ENCODE measurements at regions of chr3 and their contacts with region 1.

Region 1: GRCh38 chr3:193780810-193781472 is 187.9 kb downstream of the OPA1 start:
- DNase-seq: peak; percentile 94
- H3K4me3 ChIP-seq: no peak overlapping the region
- H3K27ac ChIP-seq: peak overlapping the region; percentile 95
- H3K4me1 ChIP-seq: peaks cover 42% of the 10 kb centered on the region
- H3K27me3 ChIP-seq: no peaks in the 10 kb centered on the region
- CTCF ChIP-seq: peak; percentile 62 to 94

Region 2: GRCh38 chr3:193836926-193837325 is 56.0 kb after region 1 on chr3:
- CTCF ChIA-PET with region 1: interaction called, 14 read pairs
- dilution Hi-C with region 1: no loop called
- in situ Hi-C with region 1: loop called in 1 of 2 experiments (anchors 5 kb)
- intact Hi-C with region 1: no loop called
- DNase-seq: no peak
- H3K4me3 ChIP-seq: no peak overlapping the region
- H3K27ac ChIP-seq: no peak overlapping the region
- H3K4me1 ChIP-seq: peaks cover 12% of the 10 kb centered on the region
- H3K27me3 ChIP-seq: no peaks in the 10 kb centered on the region
- CTCF ChIP-seq: no peak

Region 3: GRCh38 chr3:193951859-193952258 is 170.9 kb after region 1 on chr3:
- CTCF ChIA-PET with region 1: no interaction called
- dilution Hi-C with region 1: no loop called
- in situ Hi-C with region 1: no loop called
- intact Hi-C with region 1: loop called (anchors 5 kb)
- DNase-seq: peak; percentile 86
- H3K4me3 ChIP-seq: no peak overlapping the region
- H3K27ac ChIP-seq: peak overlapping the region; percentile 71
- H3K4me1 ChIP-seq: peaks cover 31% of the 10 kb centered on the region
- H3K27me3 ChIP-seq: no peaks in the 10 kb centered on the region
- CTCF ChIP-seq: no peak

Region 4: GRCh38 chr3:194070634-194071409 is 289.9 kb after region 1 on chr3:
- CTCF ChIA-PET with region 1: no interaction called
- dilution Hi-C with region 1: no loop called
- in situ Hi-C with region 1: no loop called
- intact Hi-C with region 1: loop called (anchors 5 kb)
- DNase-seq: peak; percentile 95
- H3K4me3 ChIP-seq: peak overlapping the region; percentile 18 to 40 (median 24)
- H3K27ac ChIP-seq: peak overlapping the region; percentile 61
- H3K4me1 ChIP-seq: peaks cover 20% of the 10 kb centered on the region
- H3K27me3 ChIP-seq: no peaks in the 10 kb centered on the region
- CTCF ChIP-seq: no peak

Region 5: GRCh38 chr3:194315088-194315964 is 534.4 kb after region 1 on chr3:
- CTCF ChIA-PET with region 1: interaction called, 22 read pairs
- dilution Hi-C with region 1: no loop called
- in situ Hi-C with region 1: loop called (anchors 5 kb)
- intact Hi-C with region 1: loop called (anchors 1 kb)
- DNase-seq: peak; percentile 89
- H3K4me3 ChIP-seq: peak overlapping the region; percentile 26 to 51 (median 30)
- H3K27ac ChIP-seq: peak overlapping the region; percentile 63
- H3K4me1 ChIP-seq: peaks cover 16% of the 10 kb centered on the region
- H3K27me3 ChIP-seq: no peaks in the 10 kb centered on the region
- CTCF ChIP-seq: peak; percentile 73 to 92

Region 6: DNA sequence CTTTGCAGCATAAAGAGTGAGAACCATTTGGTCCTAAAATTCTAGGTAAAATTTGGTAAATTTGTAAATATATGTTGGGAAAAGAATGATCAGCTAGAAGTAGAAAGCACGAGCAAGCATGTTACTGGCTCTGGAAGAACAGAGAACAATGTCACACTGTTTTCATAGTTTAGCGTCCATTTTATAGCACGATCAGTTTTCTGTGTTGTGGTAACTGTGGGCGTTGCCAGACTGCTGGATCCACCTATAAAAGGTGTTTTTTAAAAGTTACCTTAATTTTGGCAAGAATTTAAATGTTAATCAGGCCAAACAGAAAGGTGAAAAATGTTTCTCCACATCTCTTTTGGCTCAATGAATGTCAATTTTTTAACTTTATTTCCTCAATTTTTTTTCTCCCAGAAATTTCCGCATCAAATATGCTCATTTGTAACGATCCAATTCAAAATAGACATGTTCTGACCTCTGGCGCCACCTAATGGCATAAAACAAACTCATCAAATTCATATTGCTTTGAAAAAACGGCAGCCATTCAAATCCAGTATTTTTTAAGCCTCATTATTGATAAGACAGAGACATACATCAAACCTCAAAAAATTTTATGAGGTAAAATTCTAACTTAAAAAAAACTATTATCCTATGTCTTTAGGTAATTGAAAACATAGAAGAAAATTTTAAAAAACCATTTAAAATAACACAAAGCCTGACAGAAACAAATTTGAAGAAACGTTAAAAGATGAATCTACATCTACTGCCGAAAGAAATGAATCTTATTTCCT is 623.6 kb after region 1 on chr3:
- CTCF ChIA-PET with region 1: no interaction called
- dilution Hi-C with region 1: no loop called
- in situ Hi-C with region 1: no loop called
- intact Hi-C with region 1: loop called (anchors 5 kb)
- DNase-seq: peak; percentile 29
- H3K4me3 ChIP-seq: no peak overlapping the region
- H3K27ac ChIP-seq: no peak overlapping the region
- H3K4me1 ChIP-seq: no peaks in the 10 kb centered on the region
- H3K27me3 ChIP-seq: no peaks in the 10 kb centered on the region
- CTCF ChIP-seq: peak; percentile 64 to 69

Measured in mammary epithelial cell (primary cell).